CD8-positive, alpha-beta T cell (primary cell): ENCODE measurements at regions of chr6 and their contacts with region 1.

Region 1: DNA sequence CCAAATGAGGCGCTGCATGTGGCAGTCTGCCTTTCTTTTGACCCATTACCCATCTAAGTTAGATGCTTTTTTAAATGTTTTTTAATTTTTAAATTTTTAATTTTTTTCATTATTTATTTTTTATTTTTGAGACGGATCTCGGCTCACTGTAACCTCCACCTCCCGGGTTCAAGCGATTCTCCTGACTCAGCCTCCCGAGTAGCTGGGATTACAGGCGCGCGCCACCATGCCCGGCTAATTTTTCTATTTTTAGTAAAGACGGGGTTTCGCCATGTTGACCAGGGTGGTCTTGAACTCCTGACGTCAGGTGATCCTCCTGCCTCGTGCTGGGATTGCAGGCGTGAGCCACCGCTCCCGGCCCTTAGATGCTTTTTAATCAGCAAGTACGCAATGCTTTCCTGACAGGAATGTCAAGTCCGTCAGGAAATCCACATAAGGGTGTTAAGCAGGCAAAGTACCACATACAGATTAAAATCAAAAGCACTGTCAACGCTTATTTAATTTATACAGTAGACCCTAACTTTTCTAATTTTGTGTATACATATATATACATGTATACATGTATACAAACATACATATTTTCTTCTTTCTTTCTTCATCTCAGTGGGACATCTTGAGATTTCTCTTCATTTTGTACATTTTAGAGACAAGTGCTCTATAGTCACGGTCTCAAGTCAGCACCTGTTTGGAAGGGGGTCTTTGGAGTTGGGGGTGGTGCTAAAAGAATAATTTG is 995 bp upstream of the GSTA4 start:
- DNase-seq: peak in 7 of 9 experiments; percentile 27 to 74 (median 54)
- ATAC-seq: peak; percentile 8
- H3K4me3 ChIP-seq: peak overlapping the region; percentile 41 to 75
- H3K4me3 Mint-ChIP-seq: peak overlapping the region; percentile 94
- H3K27ac ChIP-seq: peak overlapping the region; percentile 57 to 100
- H3K27ac Mint-ChIP-seq: peak overlapping the region; percentile 99
- H3K4me1 ChIP-seq: peaks cover 6% of the 10 kb centered on the region
- H3K4me1 Mint-ChIP-seq: peaks cover 22% of the 10 kb centered on the region
- H3K27me3 ChIP-seq: no peaks in the 10 kb centered on the region
- H3K27me3 Mint-ChIP-seq: peaks cover 7% of the 10 kb centered on the region
- CTCF ChIP-seq: no peak

Region 2: GRCh38 chr6:52399511-52400312 is 596.4 kb before region 1 on chr6:
- CTCF ChIA-PET with region 1: interaction called, 3 read pairs
- POLR2A ChIA-PET with region 1: no interaction called
- intact Hi-C with region 1: loop called in 1 of 2 experiments (anchors 10 kb)
- DNase-seq: peak in 6 of 9 experiments; percentile 25 to 76 (median 52)
- ATAC-seq: peak; percentile 52
- H3K4me3 ChIP-seq: no peak overlapping the region
- H3K4me3 Mint-ChIP-seq: peak overlapping the region; percentile 53
- H3K27ac ChIP-seq: peak overlapping the region; percentile 45 to 75
- H3K27ac Mint-ChIP-seq: peak overlapping the region; percentile 93
- H3K4me1 ChIP-seq: peaks cover 71% of the 10 kb centered on the region
- H3K4me1 Mint-ChIP-seq: peaks cover 82% of the 10 kb centered on the region
- H3K27me3 ChIP-seq: no peaks in the 10 kb centered on the region
- H3K27me3 Mint-ChIP-seq: no peaks in the 10 kb centered on the region
- CTCF ChIP-seq: peak; percentile 96

Region 3: DNA sequence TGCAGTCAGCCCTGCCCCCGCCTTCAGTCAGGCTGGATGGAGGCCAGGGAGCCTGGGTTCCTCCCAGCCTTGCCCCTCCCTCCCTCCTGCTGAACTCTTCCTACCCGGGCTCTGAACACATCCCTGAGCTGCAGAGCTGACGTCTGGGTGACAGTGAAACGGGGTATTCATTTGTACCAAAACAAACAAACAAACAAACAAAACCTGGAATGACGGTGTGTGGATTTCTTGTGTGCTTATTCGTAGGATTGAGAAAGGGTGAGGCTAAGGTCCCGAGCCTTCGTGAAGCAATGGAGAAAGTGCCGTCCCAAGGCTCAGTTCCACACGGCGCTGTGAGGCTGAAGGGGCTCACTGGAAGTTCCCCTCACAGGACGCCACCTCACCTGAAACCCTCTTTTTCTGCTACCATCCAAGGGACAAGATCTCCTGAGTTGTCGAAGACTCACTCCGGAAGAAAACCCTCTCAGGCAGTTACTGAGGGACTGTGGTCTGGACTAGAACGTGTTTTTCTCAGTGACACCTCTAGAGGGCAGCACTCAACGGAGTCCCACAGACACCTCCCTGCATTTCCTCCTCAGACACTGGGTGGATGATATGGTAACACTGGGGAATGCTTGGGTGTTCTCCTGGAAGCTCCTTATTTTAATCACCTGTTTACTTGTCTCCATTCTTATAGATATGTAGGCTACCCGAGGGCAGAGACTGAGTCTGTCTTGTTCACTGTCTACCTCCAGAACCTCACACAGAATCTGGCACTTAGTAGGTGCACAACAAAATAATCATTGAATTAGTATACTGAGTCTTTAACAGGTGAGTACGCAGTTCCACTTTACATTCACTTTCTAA is 113.9 kb before region 1 on chr6:
- CTCF ChIA-PET with region 1: no interaction called
- POLR2A ChIA-PET with region 1: no interaction called
- intact Hi-C with region 1: loop called in 1 of 2 experiments (anchors 5 kb)
- DNase-seq: peak; percentile 23 to 81 (median 61)
- ATAC-seq: peak; percentile 99
- H3K4me3 ChIP-seq: peak overlapping the region; percentile 48 to 53
- H3K4me3 Mint-ChIP-seq: peak overlapping the region; percentile 86
- H3K27ac ChIP-seq: no peak overlapping the region
- H3K27ac Mint-ChIP-seq: peak overlapping the region; percentile 30
- H3K4me1 ChIP-seq: no peaks in the 10 kb centered on the region
- H3K4me1 Mint-ChIP-seq: peaks cover 4% of the 10 kb centered on the region
- H3K27me3 ChIP-seq: no peaks in the 10 kb centered on the region
- H3K27me3 Mint-ChIP-seq: no peaks in the 10 kb centered on the region
- CTCF ChIP-seq: peak; percentile 72

Region 4: GRCh38 chr6:52925919-52926770 is 69.9 kb before region 1 on chr6:
- CTCF ChIA-PET with region 1: no interaction called
- POLR2A ChIA-PET with region 1: no interaction called
- intact Hi-C with region 1: no loop called
- DNase-seq: no peak
- ATAC-seq: no peak
- H3K4me3 ChIP-seq: no peak overlapping the region
- H3K4me3 Mint-ChIP-seq: no peak overlapping the region
- H3K27ac ChIP-seq: no peak overlapping the region
- H3K27ac Mint-ChIP-seq: no peak overlapping the region
- H3K4me1 ChIP-seq: no peaks in the 10 kb centered on the region
- H3K4me1 Mint-ChIP-seq: no peaks in the 10 kb centered on the region
- H3K27me3 ChIP-seq: no peaks in the 10 kb centered on the region
- H3K27me3 Mint-ChIP-seq: peaks cover 8% of the 10 kb centered on the region
- CTCF ChIP-seq: no peak

Region 5: GRCh38 chr6:53544470-53545308 is 548.6 kb after region 1 on chr6 and contains the start of gene GCLC:
- CTCF ChIA-PET with region 1: no interaction called
- POLR2A ChIA-PET with region 1: interaction called, 4 read pairs
- intact Hi-C with region 1: loop called (anchors 1 to 5 kb)
- DNase-seq: peak; percentile 75 to 95 (median 87)
- ATAC-seq: peak; percentile 67
- H3K4me3 ChIP-seq: peak within 1 kb of the TSS; percentile 69 to 79
- H3K4me3 Mint-ChIP-seq: peak within 1 kb of the TSS; percentile 99
- H3K27ac ChIP-seq: peak within 1 kb of the TSS; percentile 48 to 62
- H3K27ac Mint-ChIP-seq: peak within 1 kb of the TSS; percentile 89
- H3K4me1 ChIP-seq: peaks cover 39% of the 10 kb centered on the region
- H3K4me1 Mint-ChIP-seq: peaks cover 68% of the 10 kb centered on the region
- H3K27me3 ChIP-seq: no peaks in the 10 kb centered on the region
- H3K27me3 Mint-ChIP-seq: no peaks in the 10 kb centered on the region
- CTCF ChIP-seq: peak; percentile 80
- total RNA-seq, gene GCLC: 13.1 to 13.6 TPM

Region 6: DNA sequence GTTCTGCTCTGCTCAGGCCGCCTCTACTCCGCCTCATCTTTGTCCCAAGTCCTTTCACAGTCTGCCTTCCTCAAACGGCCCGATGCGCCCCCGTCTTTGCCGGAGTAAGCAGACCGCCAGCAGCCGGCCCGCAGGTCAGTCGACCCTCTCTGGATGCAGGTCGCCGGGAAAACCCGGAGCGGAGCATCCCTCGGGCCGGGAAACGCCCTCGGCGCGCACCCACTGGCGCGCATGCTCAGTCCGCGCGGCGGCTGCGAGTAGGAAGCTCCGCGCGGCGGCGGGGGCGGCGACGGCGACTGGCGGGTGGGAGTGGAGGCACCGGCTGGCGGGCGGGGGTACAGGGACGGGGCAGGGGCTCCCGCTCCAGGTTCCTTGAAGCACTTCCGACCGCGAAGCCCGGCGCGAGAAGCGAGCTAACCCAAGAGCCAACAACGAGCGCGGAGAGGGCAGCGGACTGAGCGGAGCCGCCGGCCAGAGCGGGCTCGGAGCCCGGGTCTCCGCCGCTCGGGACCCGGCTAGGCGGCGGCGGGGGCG is 798.7 kb after region 1 on chr6 and contains the start of gene LRRC1:
- CTCF ChIA-PET with region 1: no interaction called
- POLR2A ChIA-PET with region 1: interaction called, 3 read pairs
- intact Hi-C with region 1: loop called (anchors 2 to 10 kb)
- DNase-seq: peak; percentile 59 to 90 (median 82)
- ATAC-seq: peak; percentile 64
- H3K4me3 ChIP-seq: peak within 1 kb of the TSS; percentile 88
- H3K4me3 Mint-ChIP-seq: peak within 1 kb of the TSS; percentile 96
- H3K27ac ChIP-seq: peak within 1 kb of the TSS; percentile 41 to 46
- H3K27ac Mint-ChIP-seq: peak within 1 kb of the TSS; percentile 87
- H3K4me1 ChIP-seq: peaks cover 13% of the 10 kb centered on the region
- H3K4me1 Mint-ChIP-seq: peaks cover 27% of the 10 kb centered on the region
- H3K27me3 ChIP-seq: no peaks in the 10 kb centered on the region
- H3K27me3 Mint-ChIP-seq: peaks cover 19% of the 10 kb centered on the region
- CTCF ChIP-seq: no peak
- total RNA-seq, gene LRRC1: 0.47 to 0.87 TPM